ENCODE measurements at regions of chrX and their contacts with region 1.

Region 1: GRCh38 chrX:146278381-146278780 is 460.8 kb downstream of the SLITRK2 start:
- DNase-seq: peak; percentile 49
- H3K4me3 Mint-ChIP-seq: no peak overlapping the region
- H3K27ac Mint-ChIP-seq: no peak overlapping the region
- H3K4me1 Mint-ChIP-seq: no peaks in the 10 kb centered on the region
- H3K27me3 Mint-ChIP-seq: no peaks in the 10 kb centered on the region
- CTCF ChIP-seq: no peak

Region 2: GRCh38 chrX:145792281-145792680 is 486.1 kb before region 1 on chrX:
- CTCF ChIA-PET with region 1: no interaction called
- POLR2A ChIA-PET with region 1: no interaction called
- intact Hi-C with region 1: no loop called
- DNase-seq: no peak
- H3K4me3 Mint-ChIP-seq: no peak overlapping the region
- H3K27ac Mint-ChIP-seq: no peak overlapping the region
- H3K4me1 Mint-ChIP-seq: no peaks in the 10 kb centered on the region
- H3K27me3 Mint-ChIP-seq: no peaks in the 10 kb centered on the region
- CTCF ChIP-seq: no peak

Region 3: GRCh38 chrX:146351620-146352019 is 73.2 kb after region 1 on chrX:
- CTCF ChIA-PET with region 1: no interaction called
- POLR2A ChIA-PET with region 1: no interaction called
- intact Hi-C with region 1: no loop called
- DNase-seq: no peak
- H3K4me3 Mint-ChIP-seq: no peak overlapping the region
- H3K27ac Mint-ChIP-seq: no peak overlapping the region
- H3K4me1 Mint-ChIP-seq: no peaks in the 10 kb centered on the region
- H3K27me3 Mint-ChIP-seq: no peaks in the 10 kb centered on the region
- CTCF ChIP-seq: no peak

Region 4: GRCh38 chrX:147838465-147839133 is 1560.2 kb after region 1 on chrX:
- CTCF ChIA-PET with region 1: interaction called, 3 read pairs
- POLR2A ChIA-PET with region 1: no interaction called
- intact Hi-C with region 1: loop called (anchors 10 kb)
- DNase-seq: peak; percentile 33
- H3K4me3 Mint-ChIP-seq: no peak overlapping the region
- H3K27ac Mint-ChIP-seq: no peak overlapping the region
- H3K4me1 Mint-ChIP-seq: no peaks in the 10 kb centered on the region
- H3K27me3 Mint-ChIP-seq: no peaks in the 10 kb centered on the region
- CTCF ChIP-seq: peak; percentile 39